Lower leg skin (tissue), 4 donors: ENCODE measurements at regions of chr5 and their contacts with region 1.

Region 1: GRCh38 chr5:124948062-124948753 is 201.8 kb upstream of the ZNF608 start:
- DNase-seq: peak in 1 of 2 donors; percentile 73
- H3K4me3 ChIP-seq: no peak overlapping the region
- CTCF ChIP-seq: no peak
- POLR2A ChIP-seq: no peak

Region 2: GRCh38 chr5:124001036-124001615 is 947.1 kb before region 1 on chr5:
- intact Hi-C with region 1: loop called (anchors 5 kb)
- DNase-seq: no peak
- H3K4me3 ChIP-seq: no peak overlapping the region
- CTCF ChIP-seq: no peak
- POLR2A ChIP-seq: no peak

Region 3: GRCh38 chr5:124561451-124561850 is 386.8 kb before region 1 on chr5:
- intact Hi-C with region 1: no loop called
- DNase-seq: no peak
- H3K4me3 ChIP-seq: no peak overlapping the region
- CTCF ChIP-seq: no peak
- POLR2A ChIP-seq: no peak